ENCODE measurements at regions of chr7 and their contacts with region 1.

Region 1: GRCh38 chr7:30406664-30407425 is 71.7 kb downstream of the NOD1 start:
- DNase-seq: no peak
- H3K4me3 ChIP-seq: no peak overlapping the region
- H3K4me3 Mint-ChIP-seq: no peak overlapping the region
- H3K27ac Mint-ChIP-seq: no peak overlapping the region
- H3K4me1 ChIP-seq: no peaks in the 10 kb centered on the region
- H3K4me1 Mint-ChIP-seq: no peaks in the 10 kb centered on the region
- H3K27me3 ChIP-seq: no peaks in the 10 kb centered on the region
- H3K27me3 Mint-ChIP-seq: no peaks in the 10 kb centered on the region
- CTCF ChIP-seq: no peak

Region 2: DNA sequence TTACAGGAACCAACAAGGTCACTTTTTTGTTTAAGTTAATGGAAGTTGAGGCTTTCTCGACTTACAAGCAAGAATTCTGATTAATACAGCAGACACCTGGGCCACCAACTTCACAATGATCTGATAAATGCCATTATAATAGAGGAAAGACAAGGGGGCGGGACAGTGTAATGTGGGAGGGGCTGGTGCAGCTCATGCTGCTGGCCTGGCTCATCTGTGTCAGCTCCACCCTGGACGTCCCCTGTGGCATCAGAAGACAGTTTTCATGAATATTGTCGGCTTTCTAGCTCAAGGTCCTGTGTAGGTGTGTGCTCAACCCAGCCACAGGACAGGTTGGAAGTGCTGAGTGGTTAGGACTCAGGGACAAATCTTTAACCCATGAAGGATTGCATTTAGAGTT is 215.0 kb before region 1 on chr7:
- CTCF ChIA-PET with region 1: no interaction called
- POLR2A ChIA-PET with region 1: interaction called, 13 read pairs
- intact Hi-C with region 1: no loop called
- DNase-seq: no peak
- H3K4me3 ChIP-seq: no peak overlapping the region
- H3K4me3 Mint-ChIP-seq: no peak overlapping the region
- H3K27ac Mint-ChIP-seq: no peak overlapping the region
- H3K4me1 ChIP-seq: no peaks in the 10 kb centered on the region
- H3K4me1 Mint-ChIP-seq: no peaks in the 10 kb centered on the region
- H3K27me3 ChIP-seq: no peaks in the 10 kb centered on the region
- H3K27me3 Mint-ChIP-seq: no peaks in the 10 kb centered on the region
- CTCF ChIP-seq: no peak

Region 3: DNA sequence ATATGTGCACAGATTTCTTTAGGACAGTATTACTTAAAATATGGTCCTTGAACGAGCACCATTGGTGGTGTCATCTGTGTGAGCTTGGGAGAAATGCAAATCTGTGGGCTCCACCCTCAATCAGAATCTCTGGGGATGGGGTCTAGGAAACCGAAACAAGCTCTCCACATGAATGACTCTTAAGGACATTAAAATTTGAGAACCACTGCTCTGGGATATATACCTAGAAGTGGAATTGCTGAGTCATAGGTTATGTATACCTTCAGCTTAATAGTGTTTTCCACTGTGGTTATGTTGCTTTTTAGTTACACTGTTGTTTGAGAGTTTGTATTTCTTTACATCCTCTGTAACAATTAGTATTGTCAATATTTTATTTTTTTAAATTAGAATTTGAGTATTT is 98.5 kb before region 1 on chr7:
- CTCF ChIA-PET with region 1: no interaction called
- POLR2A ChIA-PET with region 1: no interaction called
- intact Hi-C with region 1: no loop called
- DNase-seq: no peak
- H3K4me3 ChIP-seq: no peak overlapping the region
- H3K4me3 Mint-ChIP-seq: no peak overlapping the region
- H3K27ac Mint-ChIP-seq: no peak overlapping the region
- H3K4me1 ChIP-seq: peaks cover 5% of the 10 kb centered on the region; the same call in 1 of the 2 replicates
- H3K4me1 Mint-ChIP-seq: peaks cover 14% of the 10 kb centered on the region
- H3K27me3 ChIP-seq: no peaks in the 10 kb centered on the region
- H3K27me3 Mint-ChIP-seq: no peaks in the 10 kb centered on the region
- CTCF ChIP-seq: no peak

Measured in Caco-2 (cell line).